SK-N-SH (cell line): ENCODE measurements at regions of chr2 and their contacts with region 1.

Region 1: GRCh38 chr2:66574701-66575624 is 140.0 kb downstream of the MEIS1 start:
- DNase-seq: peak; percentile 91
- H3K4me3 ChIP-seq: peak overlapping the region; percentile 53 to 73
- H3K27ac ChIP-seq: peak overlapping the region; percentile 93 to 98
- H3K4me1 ChIP-seq: peaks cover 5 to 18% of the 10 kb centered on the region in 2 experiments; a peak in 3 of 4 replicates
- H3K27me3 ChIP-seq: no peaks in the 10 kb centered on the region
- CTCF ChIP-seq: peak; percentile 68
- EP300 ChIP-seq: peak in 1 of 2 experiments; percentile 32; a peak in 2 of 4 replicates
- RAD21 ChIP-seq: peak; percentile 82

Region 2: DNA sequence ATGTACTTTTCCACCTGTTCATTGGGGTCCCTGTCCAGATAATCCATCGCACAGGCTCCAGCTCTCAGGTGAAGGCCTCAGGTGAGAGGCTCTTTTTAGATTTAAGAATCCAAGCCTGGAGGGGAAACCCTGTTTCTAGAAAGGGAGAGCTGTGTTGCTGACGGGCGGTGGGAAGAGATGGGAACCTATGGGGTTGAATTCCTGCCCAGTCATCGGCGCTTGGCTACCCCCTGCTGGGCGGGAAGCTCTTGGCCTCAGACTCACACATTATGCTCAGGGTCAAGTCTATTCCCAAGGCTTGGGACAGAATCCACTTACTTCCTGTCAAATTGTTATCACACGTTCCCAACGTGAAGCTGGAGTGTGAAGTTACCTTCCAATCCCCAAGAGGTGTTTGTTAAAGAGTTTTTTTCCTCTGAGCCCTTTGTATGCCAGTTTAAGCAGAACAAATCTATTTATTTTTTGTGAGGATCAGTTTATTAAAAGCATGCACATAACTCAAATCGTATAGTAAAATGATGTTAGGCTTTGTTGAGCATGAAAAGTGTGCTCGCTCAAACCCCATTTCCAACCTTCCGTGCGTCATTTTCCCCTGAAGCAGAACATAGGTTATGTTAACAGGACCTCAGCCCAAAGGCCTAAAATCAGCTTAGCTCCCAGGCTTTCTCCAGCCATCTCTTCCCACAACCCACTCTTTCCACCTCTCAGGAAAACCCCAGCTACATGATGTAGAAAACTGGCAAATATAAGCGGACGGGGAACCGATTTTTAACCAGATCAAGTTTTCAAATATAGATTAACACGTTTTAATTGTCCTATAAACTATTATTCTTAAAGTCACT is 640.5 kb after region 1 on chr2:
- CTCF ChIA-PET with region 1: interaction called, 18 read pairs
- POLR2A ChIA-PET with region 1: no interaction called
- DNase-seq: peak; percentile 69
- H3K4me3 ChIP-seq: no peak overlapping the region; a peak in 1 of 4 replicates
- H3K27ac ChIP-seq: peak overlapping the region in 1 of 2 experiments; percentile 53; a peak in 2 of 4 replicates
- H3K4me1 ChIP-seq: peaks cover 0 to 18% of the 10 kb centered on the region in 2 experiments; a peak in 2 of 4 replicates
- H3K27me3 ChIP-seq: no peaks in the 10 kb centered on the region
- CTCF ChIP-seq: peak; percentile 71
- EP300 ChIP-seq: no peak
- RAD21 ChIP-seq: peak; percentile 97